SK-N-SH (cell line): ENCODE measurements at regions of chr19 and their contacts with region 1.

Region 1: GRCh38 chr19:4267101-4267900 is 11.8 kb upstream of the SHD start:
- DNase-seq: peak; percentile 89
- H3K4me3 ChIP-seq: peak overlapping the region in 1 of 2 experiments; percentile 12; a peak in 1 of 4 replicates
- H3K27ac ChIP-seq: no peak overlapping the region
- H3K4me1 ChIP-seq: no peaks in the 10 kb centered on the region
- H3K27me3 ChIP-seq: no peaks in the 10 kb centered on the region
- CTCF ChIP-seq: peak; percentile 92
- EP300 ChIP-seq: no peak
- RAD21 ChIP-seq: peak; percentile 76

Region 2: GRCh38 chr19:4246767-4247593 is 20.3 kb before region 1 on chr19 and contains the start of gene YJU2:
- CTCF ChIA-PET with region 1: interaction called, 15 read pairs
- POLR2A ChIA-PET with region 1: no interaction called
- DNase-seq: peak; percentile 98
- H3K4me3 ChIP-seq: peak within 1 kb of the TSS; percentile 61 to 75
- H3K27ac ChIP-seq: peak within 1 kb of the TSS; percentile 93 to 97
- H3K4me1 ChIP-seq: peaks cover 0 to 7% of the 10 kb centered on the region in 2 experiments; a peak in 1 of 4 replicates
- H3K27me3 ChIP-seq: no peaks in the 10 kb centered on the region
- CTCF ChIP-seq: peak; percentile 63
- EP300 ChIP-seq: peak; percentile 18 to 22; a peak in 1 of 4 replicates
- RAD21 ChIP-seq: peak; percentile 59
- polyA plus RNA-seq, gene YJU2: 25.3 and 29.0 TPM in 2 replicates

Region 3: GRCh38 chr19:4295972-4296771 is 28.9 kb after region 1 on chr19:
- CTCF ChIA-PET with region 1: interaction called, 20 read pairs
- POLR2A ChIA-PET with region 1: no interaction called
- DNase-seq: peak; percentile 90
- H3K4me3 ChIP-seq: no peak overlapping the region
- H3K27ac ChIP-seq: peak overlapping the region in 1 of 2 experiments; percentile 24; a peak in 2 of 4 replicates
- H3K4me1 ChIP-seq: peaks cover 0 to 14% of the 10 kb centered on the region in 2 experiments; a peak in 1 of 4 replicates
- H3K27me3 ChIP-seq: no peaks in the 10 kb centered on the region
- CTCF ChIP-seq: no peak
- EP300 ChIP-seq: peak in 1 of 2 experiments; percentile 30; a peak in 1 of 4 replicates
- RAD21 ChIP-seq: no peak; the same call in 1 of the 2 replicates

Region 4: GRCh38 chr19:4319067-4319718 is 51.9 kb after region 1 on chr19:
- CTCF ChIA-PET with region 1: interaction called, 13 read pairs
- POLR2A ChIA-PET with region 1: no interaction called
- DNase-seq: peak; percentile 2
- H3K4me3 ChIP-seq: no peak overlapping the region
- H3K27ac ChIP-seq: no peak overlapping the region
- H3K4me1 ChIP-seq: no peaks in the 10 kb centered on the region
- H3K27me3 ChIP-seq: no peaks in the 10 kb centered on the region
- CTCF ChIP-seq: no peak
- EP300 ChIP-seq: no peak
- RAD21 ChIP-seq: no peak

Region 5: GRCh38 chr19:4352701-4353121 is 85.4 kb after region 1 on chr19:
- CTCF ChIA-PET with region 1: interaction called, 130 read pairs
- POLR2A ChIA-PET with region 1: interaction called, 3 read pairs
- DNase-seq: peak; percentile 88
- H3K4me3 ChIP-seq: peak overlapping the region in 1 of 2 experiments; percentile 41; a peak in 1 of 4 replicates
- H3K27ac ChIP-seq: no peak overlapping the region; a peak in 1 of 4 replicates
- H3K4me1 ChIP-seq: no peaks in the 10 kb centered on the region
- H3K27me3 ChIP-seq: no peaks in the 10 kb centered on the region
- CTCF ChIP-seq: peak; percentile 76
- EP300 ChIP-seq: no peak
- RAD21 ChIP-seq: peak; percentile 69

Region 6: DNA sequence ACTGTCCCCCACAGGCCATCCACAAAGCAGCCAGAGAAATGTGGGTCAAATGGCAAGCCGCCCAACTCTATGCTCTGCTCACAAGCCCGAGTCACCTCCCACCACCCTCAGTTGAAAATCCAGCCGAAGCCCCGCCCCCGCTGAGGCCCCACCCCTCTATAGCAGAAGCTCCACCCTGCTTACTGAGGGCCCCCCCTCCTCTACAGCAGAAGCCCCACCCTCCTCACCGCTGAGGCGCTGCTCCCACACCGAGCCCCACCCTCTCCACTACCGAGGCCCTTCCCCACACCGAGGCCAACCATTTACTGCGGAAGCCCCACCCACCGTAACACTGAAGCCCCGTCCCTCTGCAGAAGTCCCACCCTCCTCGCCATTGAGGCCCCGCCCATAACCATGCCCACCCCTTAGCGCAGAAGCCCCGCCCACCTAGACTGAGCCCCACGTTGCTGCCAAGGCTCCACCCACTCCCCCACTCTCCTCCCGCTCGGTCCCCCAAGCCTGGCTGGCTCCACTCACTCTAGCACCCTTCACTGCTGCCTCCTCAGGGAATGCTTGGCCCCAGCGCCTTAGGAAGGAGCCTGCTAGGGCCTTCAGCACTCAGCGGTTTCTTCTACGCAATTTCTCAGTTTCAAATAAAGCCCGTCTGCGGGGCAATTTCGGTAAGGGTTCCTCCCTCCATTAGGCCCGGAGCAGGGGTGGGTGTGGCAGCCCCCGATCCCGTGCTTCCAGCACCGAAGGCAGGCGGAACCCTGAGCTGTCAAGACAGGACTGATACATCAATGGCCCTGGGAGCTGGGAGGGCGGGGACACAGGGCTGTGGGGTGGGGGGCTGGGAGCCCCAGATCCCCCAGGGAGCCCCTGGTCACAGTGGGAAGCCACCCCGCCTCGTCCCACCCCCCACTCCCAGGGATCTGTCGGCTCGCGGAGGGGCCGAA is 411.8 kb after region 1 on chr19:
- CTCF ChIA-PET with region 1: no interaction called
- POLR2A ChIA-PET with region 1: no interaction called
- DNase-seq: peak; percentile 81
- H3K4me3 ChIP-seq: no peak overlapping the region
- H3K27ac ChIP-seq: no peak overlapping the region
- H3K4me1 ChIP-seq: no peaks in the 10 kb centered on the region
- H3K27me3 ChIP-seq: no peaks in the 10 kb centered on the region
- CTCF ChIP-seq: no peak
- EP300 ChIP-seq: no peak
- RAD21 ChIP-seq: no peak